ENCODE measurements at regions of chr1 and their contacts with region 1.

Region 1: GRCh38 chr1:154884869-154885701 is 15.0 kb upstream of the KCNN3 start:
- DNase-seq: no peak
- ATAC-seq: peak in 1 of 4 donors; percentile 39
- H3K4me3 ChIP-seq: no peak overlapping the region
- H3K27ac ChIP-seq: peak overlapping the region in 1 of 12 donors; percentile 0
- H3K4me1 ChIP-seq: peaks cover 0 to 16% (median 5%) of the 10 kb centered on the region in 12 donors
- H3K27me3 ChIP-seq: no peaks in the 10 kb centered on the region
- CTCF ChIP-seq: no peak
- POLR2A ChIP-seq: no peak

Region 2: DNA sequence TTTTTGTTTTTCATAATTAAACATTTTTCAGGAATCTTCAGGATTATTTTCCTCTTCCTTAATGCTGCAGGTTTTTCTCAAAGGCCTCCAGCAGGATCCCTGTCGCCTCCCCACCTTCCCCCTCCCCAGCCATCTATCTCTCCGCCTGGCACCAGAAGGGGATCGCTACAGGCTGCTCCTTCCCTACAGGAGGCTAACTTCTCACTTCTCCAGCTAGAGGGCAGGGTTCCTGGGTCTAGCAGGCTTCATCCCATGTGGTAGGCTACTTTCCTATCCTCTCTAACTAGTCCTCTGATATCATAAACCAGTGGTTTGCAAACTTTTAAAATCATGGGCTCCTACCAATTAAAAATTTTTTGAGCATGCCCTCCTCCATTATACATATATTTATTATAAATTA is 119.1 kb before region 1 on chr1:
- intact Hi-C with region 1: loop called in 1 of 10 experiments (anchors 5 kb)
- DNase-seq: no peak
- ATAC-seq: peak in 3 of 4 donors; percentile 36 to 64 (median 54)
- H3K4me3 ChIP-seq: no peak overlapping the region
- H3K27ac ChIP-seq: no peak overlapping the region
- H3K4me1 ChIP-seq: peaks cover 0 to 23% (median 15%) of the 10 kb centered on the region in 12 donors
- H3K27me3 ChIP-seq: peaks cover 0 to 17% (median 0%) of the 10 kb centered on the region in 9 donors
- CTCF ChIP-seq: peak in 9 of 12 donors; percentile 12 to 44 (median 26)
- POLR2A ChIP-seq: no peak

Region 3: GRCh38 chr1:154912755-154913154 is 27.7 kb after region 1 on chr1:
- intact Hi-C with region 1: no loop called
- DNase-seq: peak in 1 of 5 donors; percentile 44
- ATAC-seq: peak; percentile 45 to 85 (median 73)
- H3K4me3 ChIP-seq: no peak overlapping the region
- H3K27ac ChIP-seq: peak overlapping the region in 7 of 12 donors; percentile 13 to 74 (median 45)
- H3K4me1 ChIP-seq: peaks cover 0 to 20% (median 4%) of the 10 kb centered on the region in 12 donors
- H3K27me3 ChIP-seq: no peaks in the 10 kb centered on the region
- CTCF ChIP-seq: no peak
- POLR2A ChIP-seq: no peak

Region 4: DNA sequence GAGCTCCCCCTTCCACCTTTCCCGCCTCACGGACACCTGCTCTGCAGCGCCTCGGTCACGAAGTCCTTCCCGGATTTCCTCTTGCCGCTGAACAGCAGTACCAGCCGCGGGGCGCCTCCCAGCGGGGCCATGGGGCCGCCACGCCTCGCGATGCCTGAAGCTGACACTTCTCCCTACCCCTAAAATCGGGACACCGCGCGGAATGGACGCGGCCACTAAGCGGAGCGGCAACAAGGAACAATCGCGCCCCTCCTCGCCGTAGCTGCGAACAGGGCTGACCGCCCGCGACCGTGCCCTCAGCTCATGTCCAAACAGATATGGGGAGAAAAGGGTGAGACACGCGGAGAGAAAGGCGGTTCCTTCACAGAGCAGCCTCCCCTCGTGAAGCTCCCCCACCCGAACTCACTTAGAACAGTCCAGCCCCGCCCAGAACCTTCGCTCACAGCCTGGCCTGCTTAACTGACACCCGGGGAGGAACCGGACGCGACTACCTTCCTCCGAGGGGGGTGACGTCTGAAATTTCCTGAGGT is 51.5 kb after region 1 on chr1 and contains the start of gene PMVK:
- intact Hi-C with region 1: loop called in 1 of 10 experiments (anchors 10 kb)
- DNase-seq: peak; percentile 96 to 97 (median 97)
- ATAC-seq: peak; percentile 93 to 96 (median 94)
- H3K4me3 ChIP-seq: peak within 1 kb of the TSS; percentile 39 to 80 (median 66)
- H3K27ac ChIP-seq: peak within 1 kb of the TSS; percentile 90 to 100 (median 98)
- H3K4me1 ChIP-seq: peaks cover 0 to 43% (median 18%) of the 10 kb centered on the region in 12 donors
- H3K27me3 ChIP-seq: no peaks in the 10 kb centered on the region
- CTCF ChIP-seq: peak in 10 of 12 donors; percentile 17 to 55 (median 37)
- POLR2A ChIP-seq: peak in 1 of 2 donors; percentile 46
- total RNA-seq, gene PMVK: 12.8 to 50.8 (median 37.5) TPM